WTC11 (cell line): ENCODE measurements at regions of chr10 and their contacts with region 1.

Region 1: GRCh38 chr10:124741281-124741921 is 2.8 kb downstream of the FAM53B start:
- DNase-seq: peak; percentile 88
- ATAC-seq: peak; percentile 62
- H3K4me3 Mint-ChIP-seq: peak overlapping the region; percentile 50
- H3K27ac Mint-ChIP-seq: no peak overlapping the region
- H3K4me1 Mint-ChIP-seq: peaks cover 73% of the 10 kb centered on the region
- H3K27me3 Mint-ChIP-seq: peaks cover 19% of the 10 kb centered on the region
- CTCF ChIP-seq: peak; percentile 79

Region 2: GRCh38 chr10:124539935-124540641 is 201.3 kb before region 1 on chr10:
- CTCF ChIA-PET with region 1: interaction called, 18 read pairs
- POLR2A ChIA-PET with region 1: no interaction called
- DNase-seq: peak; percentile 79
- ATAC-seq: peak; percentile 72
- H3K4me3 Mint-ChIP-seq: no peak overlapping the region
- H3K27ac Mint-ChIP-seq: no peak overlapping the region
- H3K4me1 Mint-ChIP-seq: peaks cover 10% of the 10 kb centered on the region
- H3K27me3 Mint-ChIP-seq: no peaks in the 10 kb centered on the region
- CTCF ChIP-seq: no peak

Region 3: GRCh38 chr10:124612611-124613498 is 128.5 kb before region 1 on chr10:
- CTCF ChIA-PET with region 1: interaction called, 13 read pairs
- POLR2A ChIA-PET with region 1: no interaction called
- DNase-seq: peak; percentile 72
- ATAC-seq: peak; percentile 78
- H3K4me3 Mint-ChIP-seq: no peak overlapping the region
- H3K27ac Mint-ChIP-seq: no peak overlapping the region
- H3K4me1 Mint-ChIP-seq: peaks cover 16% of the 10 kb centered on the region
- H3K27me3 Mint-ChIP-seq: no peaks in the 10 kb centered on the region; the same call in 1 of the 2 replicates
- CTCF ChIP-seq: no peak

Region 4: GRCh38 chr10:124647421-124648130 is 93.8 kb before region 1 on chr10:
- CTCF ChIA-PET with region 1: interaction called, 57 read pairs
- POLR2A ChIA-PET with region 1: no interaction called
- DNase-seq: no peak
- ATAC-seq: peak; percentile 44
- H3K4me3 Mint-ChIP-seq: no peak overlapping the region
- H3K27ac Mint-ChIP-seq: peak overlapping the region; percentile 12; the same call in 1 of the 2 replicates
- H3K4me1 Mint-ChIP-seq: peaks cover 43% of the 10 kb centered on the region
- H3K27me3 Mint-ChIP-seq: no peaks in the 10 kb centered on the region
- CTCF ChIP-seq: no peak

Region 5: GRCh38 chr10:124719213-124719851 is 22.1 kb before region 1 on chr10:
- CTCF ChIA-PET with region 1: interaction called, 53 read pairs
- POLR2A ChIA-PET with region 1: interaction called, 4 read pairs
- DNase-seq: no peak
- ATAC-seq: peak; percentile 57
- H3K4me3 Mint-ChIP-seq: no peak overlapping the region
- H3K27ac Mint-ChIP-seq: no peak overlapping the region; the same call in 1 of the 2 replicates
- H3K4me1 Mint-ChIP-seq: peaks cover 24% of the 10 kb centered on the region
- H3K27me3 Mint-ChIP-seq: no peaks in the 10 kb centered on the region
- CTCF ChIP-seq: no peak